SK-N-SH (cell line): ENCODE measurements at regions of chr12 and their contacts with region 1.

Region 1: GRCh38 chr12:49866859-49867579 is 24.1 kb upstream of the BCDIN3D start:
- DNase-seq: peak; percentile 89
- H3K4me3 ChIP-seq: no peak overlapping the region; a peak in 1 of 4 replicates
- H3K27ac ChIP-seq: no peak overlapping the region
- H3K4me1 ChIP-seq: peaks cover 32 to 52% of the 10 kb centered on the region in 2 experiments
- H3K27me3 ChIP-seq: no peaks in the 10 kb centered on the region
- CTCF ChIP-seq: peak; percentile 96
- EP300 ChIP-seq: no peak
- RAD21 ChIP-seq: peak; percentile 93

Region 2: GRCh38 chr12:49733219-49734017 is 133.6 kb before region 1 on chr12:
- CTCF ChIA-PET with region 1: no interaction called
- POLR2A ChIA-PET with region 1: no interaction called
- DNase-seq: no peak
- H3K4me3 ChIP-seq: no peak overlapping the region
- H3K27ac ChIP-seq: no peak overlapping the region
- H3K4me1 ChIP-seq: no peaks in the 10 kb centered on the region
- H3K27me3 ChIP-seq: no peaks in the 10 kb centered on the region
- CTCF ChIP-seq: peak; percentile 13; the same call in 1 of the 2 replicates
- EP300 ChIP-seq: no peak
- RAD21 ChIP-seq: no peak

Region 3: GRCh38 chr12:49776413-49776812 is 90.6 kb before region 1 on chr12:
- CTCF ChIA-PET with region 1: interaction called, 13 read pairs
- POLR2A ChIA-PET with region 1: no interaction called
- DNase-seq: peak; percentile 79
- H3K4me3 ChIP-seq: peak overlapping the region in 1 of 2 experiments; percentile 9; a peak in 1 of 4 replicates
- H3K27ac ChIP-seq: no peak overlapping the region
- H3K4me1 ChIP-seq: no peaks in the 10 kb centered on the region
- H3K27me3 ChIP-seq: no peaks in the 10 kb centered on the region
- CTCF ChIP-seq: peak; percentile 84
- EP300 ChIP-seq: no peak
- RAD21 ChIP-seq: peak; percentile 91

Region 4: DNA sequence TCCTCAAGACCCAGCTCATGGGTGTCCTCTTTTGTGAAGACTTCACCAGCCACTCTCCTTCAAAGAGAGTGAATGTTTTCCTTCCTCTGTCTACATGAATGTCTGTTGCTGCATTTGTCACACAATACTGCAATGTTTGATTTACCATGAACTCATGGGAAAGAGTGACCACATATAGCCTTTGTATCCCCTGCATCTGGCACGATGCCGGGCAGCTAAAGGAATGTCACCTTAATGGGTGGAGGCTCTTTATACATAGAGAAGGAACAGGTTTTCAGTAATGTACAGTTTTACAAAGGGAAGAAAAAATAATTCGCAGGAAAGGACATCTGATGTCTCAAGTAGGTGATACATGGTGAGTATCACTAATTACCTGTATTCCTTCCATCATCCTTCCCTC is 12.0 kb before region 1 on chr12:
- CTCF ChIA-PET with region 1: interaction called, 27 read pairs
- POLR2A ChIA-PET with region 1: no interaction called
- DNase-seq: no peak
- H3K4me3 ChIP-seq: no peak overlapping the region
- H3K27ac ChIP-seq: no peak overlapping the region
- H3K4me1 ChIP-seq: no peaks in the 10 kb centered on the region
- H3K27me3 ChIP-seq: peaks cover 16% of the 10 kb centered on the region; the same call in 1 of the 2 replicates
- CTCF ChIP-seq: no peak
- EP300 ChIP-seq: no peak
- RAD21 ChIP-seq: no peak

Region 5: GRCh38 chr12:49909826-49910225 is 42.8 kb after region 1 on chr12:
- CTCF ChIA-PET with region 1: interaction called, 14 read pairs
- POLR2A ChIA-PET with region 1: no interaction called
- DNase-seq: no peak
- H3K4me3 ChIP-seq: no peak overlapping the region
- H3K27ac ChIP-seq: no peak overlapping the region
- H3K4me1 ChIP-seq: peaks cover 0 to 7% of the 10 kb centered on the region in 2 experiments; a peak in 1 of 4 replicates
- H3K27me3 ChIP-seq: no peaks in the 10 kb centered on the region
- CTCF ChIP-seq: no peak
- EP300 ChIP-seq: no peak
- RAD21 ChIP-seq: no peak

Region 6: DNA sequence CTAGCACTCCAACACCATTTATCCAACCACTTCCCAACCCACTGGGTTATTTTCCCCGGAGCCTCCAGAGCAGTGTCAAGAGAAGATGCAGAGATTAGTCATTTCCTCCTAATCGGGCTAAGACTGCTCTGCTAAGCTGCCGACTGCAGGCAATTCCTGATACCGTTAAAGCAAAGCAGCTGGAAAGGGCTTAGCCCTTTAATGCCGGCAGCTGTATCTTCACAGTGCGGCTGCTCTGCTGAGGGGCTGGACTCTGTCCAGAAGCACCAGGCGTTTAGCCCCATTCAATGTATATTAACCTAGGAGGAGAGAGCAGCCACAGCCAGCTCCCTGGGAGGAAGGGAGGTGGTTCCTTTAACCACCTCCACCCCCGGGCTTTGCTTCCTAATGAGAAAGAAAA is 116.9 kb after region 1 on chr12:
- CTCF ChIA-PET with region 1: interaction called, 32 read pairs
- POLR2A ChIA-PET with region 1: interaction called, 8 read pairs
- DNase-seq: peak; percentile 62
- H3K4me3 ChIP-seq: no peak overlapping the region
- H3K27ac ChIP-seq: peak overlapping the region; percentile 70 to 99
- H3K4me1 ChIP-seq: peaks cover 20 to 80% of the 10 kb centered on the region in 2 experiments
- H3K27me3 ChIP-seq: no peaks in the 10 kb centered on the region
- CTCF ChIP-seq: no peak
- EP300 ChIP-seq: peak in 1 of 2 experiments; percentile 87; a peak in 2 of 4 replicates
- RAD21 ChIP-seq: peak; percentile 24

Region 7: GRCh38 chr12:50055831-50056638 is 189.0 kb after region 1 on chr12:
- CTCF ChIA-PET with region 1: interaction called, 86 read pairs
- POLR2A ChIA-PET with region 1: no interaction called
- DNase-seq: peak; percentile 86
- H3K4me3 ChIP-seq: no peak overlapping the region; a peak in 1 of 4 replicates
- H3K27ac ChIP-seq: no peak overlapping the region
- H3K4me1 ChIP-seq: peaks cover 7 to 29% of the 10 kb centered on the region in 2 experiments; a peak in 2 of 4 replicates
- H3K27me3 ChIP-seq: peaks cover 7% of the 10 kb centered on the region
- CTCF ChIP-seq: peak; percentile 97
- EP300 ChIP-seq: no peak
- RAD21 ChIP-seq: peak; percentile 88

Region 8: GRCh38 chr12:50123203-50123602 is 256.2 kb after region 1 on chr12:
- CTCF ChIA-PET with region 1: no interaction called
- POLR2A ChIA-PET with region 1: no interaction called
- DNase-seq: no peak
- H3K4me3 ChIP-seq: no peak overlapping the region
- H3K27ac ChIP-seq: no peak overlapping the region
- H3K4me1 ChIP-seq: no peaks in the 10 kb centered on the region; a peak in 1 of 4 replicates
- H3K27me3 ChIP-seq: no peaks in the 10 kb centered on the region
- CTCF ChIP-seq: no peak
- EP300 ChIP-seq: no peak
- RAD21 ChIP-seq: no peak